Activated CD8-positive, alpha-beta T cell treated with anti-CD3 and anti-CD28 coated beads, Interleukin-2, amount 10 ng/mL, durations not matched to agents 7 days and 5 days (primary cell): ENCODE measurements at regions of chr2 and their contacts with region 1.

Region 1: GRCh38 chr2:190088917-190089316 is 26.4 kb upstream of the MSTN start:
- DNase-seq: peak; percentile 66
- ATAC-seq: peak; percentile 47
- H3K4me3 Mint-ChIP-seq: no peak overlapping the region
- H3K27ac Mint-ChIP-seq: no peak overlapping the region
- H3K4me1 Mint-ChIP-seq: no peaks in the 10 kb centered on the region
- H3K27me3 Mint-ChIP-seq: no peaks in the 10 kb centered on the region

Region 2: DNA sequence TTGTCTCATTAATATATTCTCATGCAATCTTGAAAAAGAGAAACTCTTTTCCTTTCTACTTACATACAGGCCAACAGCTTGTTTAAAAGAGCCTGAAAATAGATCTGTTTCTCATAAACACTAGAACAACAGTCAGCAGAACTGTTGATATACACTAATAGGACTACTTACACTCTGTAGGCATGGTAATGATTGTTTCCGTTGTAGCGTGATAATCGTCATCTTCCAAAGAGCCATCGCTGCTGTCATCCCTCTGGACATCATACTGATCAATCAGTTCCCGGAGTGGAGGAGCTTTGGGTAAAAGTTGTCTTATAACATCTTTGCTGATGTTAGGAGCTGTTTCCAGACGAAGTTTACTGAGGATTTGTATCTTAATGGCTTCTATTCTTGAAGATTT is 26.9 kb before region 1 on chr2:
- CTCF ChIA-PET with region 1: no interaction called
- POLR2A ChIA-PET with region 1: no interaction called
- DNase-seq: no peak
- ATAC-seq: no peak
- H3K4me3 Mint-ChIP-seq: no peak overlapping the region
- H3K27ac Mint-ChIP-seq: no peak overlapping the region
- H3K4me1 Mint-ChIP-seq: no peaks in the 10 kb centered on the region
- H3K27me3 Mint-ChIP-seq: peaks cover 2% of the 10 kb centered on the region

Region 3: GRCh38 chr2:190277234-190278112 is 188.6 kb after region 1 on chr2:
- CTCF ChIA-PET with region 1: interaction called, 10 read pairs
- POLR2A ChIA-PET with region 1: no interaction called
- DNase-seq: peak; percentile 32
- ATAC-seq: peak; percentile 55
- H3K4me3 Mint-ChIP-seq: no peak overlapping the region
- H3K27ac Mint-ChIP-seq: no peak overlapping the region
- H3K4me1 Mint-ChIP-seq: peaks cover 3% of the 10 kb centered on the region
- H3K27me3 Mint-ChIP-seq: no peaks in the 10 kb centered on the region